PC-3 (cell line): ENCODE measurements at regions of chrX and their contacts with region 1.

Region 1: DNA sequence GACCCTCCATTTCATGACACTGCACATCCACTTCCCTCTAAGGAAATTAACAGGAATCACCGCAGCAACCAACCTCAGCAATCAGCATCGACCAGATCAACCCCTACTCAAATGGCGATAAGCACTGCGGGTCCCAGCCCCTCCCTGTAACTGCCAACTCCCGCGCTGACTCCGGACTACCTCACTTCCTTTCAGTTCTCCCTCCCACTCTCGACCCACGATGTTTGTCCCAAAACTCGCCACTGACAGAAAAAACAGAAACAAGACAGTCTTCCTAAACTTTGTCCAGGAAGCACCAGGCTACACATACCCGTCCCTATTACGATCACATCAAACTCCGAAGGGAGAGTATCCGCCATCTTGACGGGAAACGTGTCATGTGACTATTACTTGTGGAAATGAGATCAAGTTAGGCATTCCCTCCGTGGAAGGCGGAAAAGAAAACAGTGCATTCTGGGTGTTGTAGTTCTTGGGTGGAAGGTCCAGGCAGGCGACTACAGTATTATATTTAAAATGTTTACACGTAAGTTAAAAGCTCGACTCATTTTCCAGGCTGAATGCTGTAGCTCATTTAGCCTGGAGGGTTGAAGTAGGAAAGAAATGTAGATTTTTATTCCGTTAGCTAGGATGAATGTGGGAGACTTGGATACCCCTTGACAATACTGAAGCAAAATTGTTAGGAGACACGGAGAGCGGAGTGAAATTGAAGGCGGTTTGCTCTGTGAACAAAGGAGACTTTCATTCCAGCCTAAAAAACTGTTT is at the start of gene CHM:
- DNase-seq: peak; percentile 80
- ATAC-seq: peak; percentile 97
- H3K4me3 ChIP-seq: peak within 1 kb of the TSS; percentile 86
- H3K27ac ChIP-seq: peak within 1 kb of the TSS; percentile 73
- H3K4me1 ChIP-seq: peaks cover 7% of the 10 kb centered on the region
- H3K27me3 ChIP-seq: no peaks in the 10 kb centered on the region
- CTCF ChIP-seq: no peak
- total RNA-seq, gene CHM: 13.6 and 14.9 TPM in 2 replicates

Region 2: DNA sequence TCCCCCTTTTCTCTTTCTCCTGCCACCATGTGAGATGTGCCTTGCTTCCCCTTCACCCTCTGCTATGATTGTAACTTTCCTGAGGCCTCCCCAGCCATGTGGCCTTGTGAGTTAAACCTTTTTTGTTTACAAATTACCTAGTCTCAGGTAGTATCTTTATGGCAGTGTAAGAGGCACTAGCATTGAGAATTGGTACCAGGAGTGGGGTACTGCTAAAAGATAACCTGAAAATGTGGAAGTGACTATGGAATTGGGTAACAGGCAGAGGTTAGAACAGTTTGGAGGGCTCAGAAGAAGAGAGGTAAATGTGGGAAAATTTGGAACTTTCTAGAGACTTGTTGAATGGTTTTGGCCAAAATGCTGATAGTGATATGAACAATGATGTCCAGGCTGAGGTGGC is 182.0 kb before region 1 on chrX:
- CTCF ChIA-PET with region 1: no interaction called
- POLR2A ChIA-PET with region 1: no interaction called
- intact Hi-C with region 1: loop called (anchors 10 kb)
- DNase-seq: no peak
- ATAC-seq: no peak
- H3K4me3 ChIP-seq: no peak overlapping the region
- H3K27ac ChIP-seq: no peak overlapping the region
- H3K4me1 ChIP-seq: no peaks in the 10 kb centered on the region
- H3K27me3 ChIP-seq: no peaks in the 10 kb centered on the region
- CTCF ChIP-seq: no peak